ENCODE measurements at regions of chr13 and their contacts with region 1.

Region 1: GRCh38 chr13:91185294-91185863 is 162.1 kb upstream of the MIR17HG start:
- DNase-seq: peak in 1 of 2 experiments; percentile 51
- H3K4me3 ChIP-seq: no peak overlapping the region
- H3K4me3 Mint-ChIP-seq: no peak overlapping the region
- H3K27ac Mint-ChIP-seq: no peak overlapping the region
- H3K4me1 ChIP-seq: peaks cover 46% of the 10 kb centered on the region
- H3K4me1 Mint-ChIP-seq: peaks cover 32% of the 10 kb centered on the region
- H3K27me3 ChIP-seq: no peaks in the 10 kb centered on the region
- H3K27me3 Mint-ChIP-seq: no peaks in the 10 kb centered on the region
- CTCF ChIP-seq: peak; percentile 45 to 58

Region 2: GRCh38 chr13:89822467-89822866 is 1362.9 kb before region 1 on chr13:
- CTCF ChIA-PET with region 1: no interaction called
- POLR2A ChIA-PET with region 1: no interaction called
- intact Hi-C with region 1: no loop called
- DNase-seq: no peak
- H3K4me3 ChIP-seq: no peak overlapping the region
- H3K4me3 Mint-ChIP-seq: no peak overlapping the region
- H3K27ac Mint-ChIP-seq: no peak overlapping the region
- H3K4me1 ChIP-seq: no peaks in the 10 kb centered on the region
- H3K4me1 Mint-ChIP-seq: no peaks in the 10 kb centered on the region
- H3K27me3 ChIP-seq: no peaks in the 10 kb centered on the region
- H3K27me3 Mint-ChIP-seq: no peaks in the 10 kb centered on the region
- CTCF ChIP-seq: no peak

Region 3: GRCh38 chr13:90872491-90873025 is 312.8 kb before region 1 on chr13:
- CTCF ChIA-PET with region 1: no interaction called
- POLR2A ChIA-PET with region 1: no interaction called
- intact Hi-C with region 1: loop called (anchors 10 kb)
- DNase-seq: no peak
- H3K4me3 ChIP-seq: no peak overlapping the region
- H3K4me3 Mint-ChIP-seq: no peak overlapping the region
- H3K27ac Mint-ChIP-seq: no peak overlapping the region
- H3K4me1 ChIP-seq: no peaks in the 10 kb centered on the region
- H3K4me1 Mint-ChIP-seq: peaks cover 1% of the 10 kb centered on the region
- H3K27me3 ChIP-seq: no peaks in the 10 kb centered on the region
- H3K27me3 Mint-ChIP-seq: peaks cover 9% of the 10 kb centered on the region
- CTCF ChIP-seq: no peak

Region 4: DNA sequence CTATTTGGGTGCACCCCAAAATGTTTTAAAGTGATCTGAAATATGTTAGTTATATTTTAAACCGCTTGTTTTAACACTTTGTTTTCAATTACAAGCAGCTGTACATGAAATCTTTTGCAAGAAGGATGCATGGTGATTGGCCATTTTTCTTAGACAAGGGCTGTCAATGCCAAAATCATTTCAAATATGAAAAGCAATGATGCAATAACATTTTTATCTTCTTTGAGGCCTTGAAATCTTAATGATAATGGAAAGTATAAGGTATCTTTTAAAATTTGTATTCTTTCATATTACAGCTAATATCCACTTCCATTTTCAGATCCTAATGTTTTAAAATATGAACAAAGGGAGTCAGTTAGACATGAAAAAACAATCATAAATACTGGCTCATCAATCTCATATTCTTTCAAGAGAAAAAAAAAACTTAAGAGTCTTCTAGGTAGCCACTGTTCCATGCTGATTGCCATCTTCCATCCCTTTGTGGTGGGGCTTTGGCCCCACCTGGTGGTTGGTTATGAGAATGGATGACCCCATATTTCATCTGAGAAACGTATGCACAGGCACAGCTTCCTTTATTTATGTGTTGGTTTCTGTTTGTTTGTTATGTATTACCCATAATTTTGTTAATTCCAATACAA is 168.2 kb before region 1 on chr13:
- CTCF ChIA-PET with region 1: interaction called, 4 read pairs
- POLR2A ChIA-PET with region 1: no interaction called
- intact Hi-C with region 1: loop called (anchors 2 kb)
- DNase-seq: peak; percentile 52 to 71
- H3K4me3 ChIP-seq: no peak overlapping the region
- H3K4me3 Mint-ChIP-seq: no peak overlapping the region
- H3K27ac Mint-ChIP-seq: no peak overlapping the region
- H3K4me1 ChIP-seq: no peaks in the 10 kb centered on the region
- H3K4me1 Mint-ChIP-seq: no peaks in the 10 kb centered on the region
- H3K27me3 ChIP-seq: no peaks in the 10 kb centered on the region
- H3K27me3 Mint-ChIP-seq: peaks cover 7% of the 10 kb centered on the region
- CTCF ChIP-seq: peak; percentile 82 to 87

Region 5: GRCh38 chr13:91101381-91101780 is 84.0 kb before region 1 on chr13:
- CTCF ChIA-PET with region 1: no interaction called
- POLR2A ChIA-PET with region 1: no interaction called
- intact Hi-C with region 1: no loop called
- DNase-seq: no peak
- H3K4me3 ChIP-seq: no peak overlapping the region
- H3K4me3 Mint-ChIP-seq: no peak overlapping the region
- H3K27ac Mint-ChIP-seq: no peak overlapping the region
- H3K4me1 ChIP-seq: no peaks in the 10 kb centered on the region
- H3K4me1 Mint-ChIP-seq: no peaks in the 10 kb centered on the region
- H3K27me3 ChIP-seq: no peaks in the 10 kb centered on the region
- H3K27me3 Mint-ChIP-seq: peaks cover 15% of the 10 kb centered on the region
- CTCF ChIP-seq: no peak

Region 6: DNA sequence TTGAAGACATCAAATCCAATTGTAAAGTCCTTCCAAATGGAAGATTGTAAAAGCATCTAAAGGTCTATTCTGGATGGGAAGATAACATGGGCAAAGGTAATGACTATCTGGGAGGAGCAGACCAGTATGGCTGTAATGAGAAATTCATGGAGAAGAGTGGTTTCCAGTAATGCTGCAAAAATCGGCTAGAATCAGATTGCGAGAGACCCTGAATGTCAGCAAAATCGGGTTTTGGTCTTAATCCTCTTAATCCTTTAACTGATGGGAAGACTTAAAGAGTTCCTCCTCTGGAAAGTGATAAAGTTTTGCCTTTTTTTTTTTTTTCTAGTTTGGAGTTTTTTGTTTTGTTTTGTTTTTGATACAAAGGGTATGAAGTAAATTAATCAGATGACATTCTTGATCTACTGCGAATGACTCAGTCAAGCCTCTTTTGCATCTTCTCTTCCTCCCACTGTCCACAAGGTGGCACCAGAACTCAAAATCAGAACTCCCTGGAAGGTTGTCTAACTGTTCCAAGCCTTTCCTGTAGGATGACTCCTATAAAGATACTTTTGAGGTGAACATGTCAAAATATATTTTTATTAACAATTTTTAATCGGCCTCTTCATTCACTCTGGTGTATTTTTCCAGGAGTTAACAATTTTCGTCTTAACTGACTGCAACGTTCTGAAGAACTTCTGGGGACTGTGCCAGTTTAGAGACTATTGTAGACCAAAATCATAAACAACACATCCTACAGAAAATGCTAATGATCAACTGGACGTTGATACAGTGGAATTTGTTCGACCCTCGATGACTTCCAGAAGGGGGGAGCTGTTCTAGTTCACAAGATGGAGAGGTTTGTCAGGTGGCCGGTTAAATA is 51.2 kb before region 1 on chr13:
- CTCF ChIA-PET with region 1: interaction called, 7 read pairs
- POLR2A ChIA-PET with region 1: no interaction called
- intact Hi-C with region 1: loop called (anchors 1 kb)
- DNase-seq: peak; percentile 69 to 72
- H3K4me3 ChIP-seq: no peak overlapping the region
- H3K4me3 Mint-ChIP-seq: no peak overlapping the region
- H3K27ac Mint-ChIP-seq: peak overlapping the region; percentile 21
- H3K4me1 ChIP-seq: peaks cover 34% of the 10 kb centered on the region
- H3K4me1 Mint-ChIP-seq: peaks cover 16% of the 10 kb centered on the region
- H3K27me3 ChIP-seq: no peaks in the 10 kb centered on the region
- H3K27me3 Mint-ChIP-seq: no peaks in the 10 kb centered on the region
- CTCF ChIP-seq: peak; percentile 90 to 94

Region 7: DNA sequence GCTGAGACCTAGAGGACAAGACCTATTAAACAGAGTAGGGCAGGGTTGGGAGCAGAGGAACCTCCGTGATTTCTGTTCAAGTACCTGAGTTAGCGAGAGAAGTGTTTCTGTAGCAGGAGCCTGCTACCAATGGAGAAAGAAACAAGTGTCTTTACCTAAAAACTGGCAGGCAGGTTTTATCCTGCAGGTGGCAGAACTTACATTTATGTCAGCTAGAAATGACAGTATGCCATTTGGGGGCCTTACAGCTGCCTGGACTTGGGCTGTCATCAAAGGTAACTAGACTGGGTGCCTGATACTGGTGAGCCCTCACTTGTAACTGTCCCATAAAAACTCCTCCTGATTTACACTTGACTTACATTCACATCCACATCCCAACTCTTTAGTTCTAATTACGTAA is 23.2 kb before region 1 on chr13:
- CTCF ChIA-PET with region 1: interaction called, 42 read pairs
- POLR2A ChIA-PET with region 1: interaction called, 5 read pairs
- intact Hi-C with region 1: loop called (anchors 1 kb)
- DNase-seq: peak; percentile 52 to 62
- H3K4me3 ChIP-seq: no peak overlapping the region
- H3K4me3 Mint-ChIP-seq: no peak overlapping the region
- H3K27ac Mint-ChIP-seq: no peak overlapping the region
- H3K4me1 ChIP-seq: peaks cover 21% of the 10 kb centered on the region
- H3K4me1 Mint-ChIP-seq: peaks cover 29% of the 10 kb centered on the region
- H3K27me3 ChIP-seq: no peaks in the 10 kb centered on the region
- H3K27me3 Mint-ChIP-seq: no peaks in the 10 kb centered on the region
- CTCF ChIP-seq: peak in 1 of 2 experiments; percentile 20

Region 8: DNA sequence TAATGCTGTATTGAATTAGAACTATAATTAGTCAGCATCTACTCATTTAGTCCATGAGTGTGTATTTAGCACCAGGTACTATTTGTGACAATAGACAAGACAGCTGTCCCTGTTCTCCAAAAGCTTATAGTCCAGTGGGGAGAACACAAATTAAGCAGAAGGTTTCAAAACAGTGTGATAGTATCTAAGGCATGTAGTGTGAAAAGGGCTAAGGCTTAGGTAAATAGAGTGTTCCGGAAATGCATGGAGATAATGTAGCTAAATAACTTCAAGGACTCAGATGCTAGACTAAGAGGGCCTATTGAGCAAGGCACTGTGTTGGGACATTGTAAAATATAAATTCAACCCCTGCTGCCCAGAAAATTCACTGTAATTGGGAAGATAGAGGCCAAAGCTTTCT is 18.1 kb after region 1 on chr13:
- CTCF ChIA-PET with region 1: interaction called, 3 read pairs
- POLR2A ChIA-PET with region 1: no interaction called
- intact Hi-C with region 1: loop called (anchors 1 kb)
- DNase-seq: no peak
- H3K4me3 ChIP-seq: no peak overlapping the region
- H3K4me3 Mint-ChIP-seq: no peak overlapping the region
- H3K27ac Mint-ChIP-seq: peak overlapping the region; percentile 48
- H3K4me1 ChIP-seq: peaks cover 17% of the 10 kb centered on the region
- H3K4me1 Mint-ChIP-seq: peaks cover 26% of the 10 kb centered on the region
- H3K27me3 ChIP-seq: no peaks in the 10 kb centered on the region
- H3K27me3 Mint-ChIP-seq: no peaks in the 10 kb centered on the region
- CTCF ChIP-seq: no peak

Region 9: GRCh38 chr13:91348906-91349435 is 163.6 kb after region 1 on chr13:
- CTCF ChIA-PET with region 1: no interaction called
- POLR2A ChIA-PET with region 1: no interaction called
- intact Hi-C with region 1: loop called (anchors 5 kb)
- DNase-seq: peak; percentile 92 to 97
- H3K4me3 ChIP-seq: peak overlapping the region; percentile 79
- H3K4me3 Mint-ChIP-seq: peak overlapping the region; percentile 95
- H3K27ac Mint-ChIP-seq: peak overlapping the region; percentile 94
- H3K4me1 ChIP-seq: peaks cover 23% of the 10 kb centered on the region
- H3K4me1 Mint-ChIP-seq: no peaks in the 10 kb centered on the region
- H3K27me3 ChIP-seq: no peaks in the 10 kb centered on the region
- H3K27me3 Mint-ChIP-seq: no peaks in the 10 kb centered on the region
- CTCF ChIP-seq: peak; percentile 91 to 92